ENCODE measurements at regions of chrX and their contacts with region 1.

Region 1: GRCh38 chrX:2627272-2627867 is 63.7 kb upstream of the CD99 start:
- DNase-seq: peak; percentile 69
- ATAC-seq: peak; percentile 83
- H3K4me3 Mint-ChIP-seq: no peak overlapping the region
- H3K27ac Mint-ChIP-seq: peak overlapping the region; percentile 23
- H3K4me1 Mint-ChIP-seq: peaks cover 36% of the 10 kb centered on the region
- H3K27me3 Mint-ChIP-seq: no peaks in the 10 kb centered on the region

Region 2: DNA sequence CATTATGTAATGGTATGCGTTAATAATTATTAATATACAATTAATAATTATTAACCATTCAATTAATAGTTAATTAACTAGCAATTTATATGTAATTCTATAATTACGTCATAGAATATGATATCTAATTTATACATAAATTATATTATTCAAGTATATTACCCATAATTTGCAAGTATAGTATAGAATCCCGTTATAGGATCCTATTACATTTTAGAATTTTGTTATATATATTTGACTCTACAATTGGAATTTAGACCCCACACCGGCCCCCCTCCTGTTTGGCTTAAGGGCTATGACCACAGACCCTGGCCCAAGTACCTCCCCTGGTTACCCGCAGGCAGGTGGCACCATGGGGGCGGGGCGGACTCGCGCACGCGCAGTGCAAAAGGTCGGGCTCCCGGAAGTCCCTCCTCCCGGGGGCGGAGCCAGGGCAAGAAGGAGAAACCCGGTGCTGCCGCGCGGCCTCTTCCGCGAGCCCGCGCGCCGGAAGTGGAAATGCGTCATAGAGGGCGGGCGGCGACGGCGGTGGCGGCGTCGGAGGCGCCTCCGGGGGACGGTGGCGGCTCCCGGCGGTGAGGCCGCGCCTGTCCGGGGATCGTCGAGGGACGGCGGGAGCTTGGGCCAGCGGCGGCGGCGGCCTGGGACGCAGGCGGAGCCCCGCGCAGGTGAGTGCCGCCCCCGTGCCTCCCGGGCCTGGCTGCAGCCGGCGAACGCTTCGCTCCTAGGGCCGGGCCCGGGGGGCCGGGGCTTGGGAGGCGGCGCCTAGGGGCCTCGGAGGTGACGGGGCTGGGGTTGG is 1036.1 kb before region 1 on chrX and contains the start of gene AKAP17A:
- CTCF ChIA-PET with region 1: no interaction called
- POLR2A ChIA-PET with region 1: no interaction called
- intact Hi-C with region 1: loop called in 1 of 2 experiments (anchors 1 kb)
- DNase-seq: peak; percentile 99
- ATAC-seq: peak; percentile 91
- H3K4me3 Mint-ChIP-seq: peak within 1 kb of the TSS; percentile 91
- H3K27ac Mint-ChIP-seq: peak within 1 kb of the TSS; percentile 89
- H3K4me1 Mint-ChIP-seq: peaks cover 27% of the 10 kb centered on the region
- H3K27me3 Mint-ChIP-seq: no peaks in the 10 kb centered on the region
- total RNA-seq, gene AKAP17A: 49.7 to 51.2 TPM

Region 3: DNA sequence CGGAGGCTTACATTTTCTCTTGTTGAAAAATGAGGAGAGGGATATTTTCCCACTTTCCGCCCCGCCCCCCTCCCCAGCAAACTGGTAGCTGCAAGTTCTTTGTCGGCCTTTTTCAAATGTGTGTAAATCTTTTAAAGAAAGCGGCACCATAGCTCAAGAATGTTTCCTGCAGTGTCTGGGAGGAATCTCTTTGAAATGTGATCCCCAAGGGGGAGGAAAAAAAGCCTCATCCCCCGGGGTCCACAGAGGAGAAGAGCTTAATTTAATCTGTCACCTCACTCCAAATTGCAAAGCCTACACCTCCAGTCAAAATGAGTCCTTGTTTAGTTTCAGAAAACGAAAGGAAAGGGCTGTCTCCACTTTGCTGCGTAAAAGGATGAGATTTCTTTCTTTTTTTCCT is 977.7 kb before region 1 on chrX:
- CTCF ChIA-PET with region 1: no interaction called
- POLR2A ChIA-PET with region 1: no interaction called
- intact Hi-C with region 1: loop called in 1 of 2 experiments (anchors 1 kb)
- DNase-seq: no peak
- ATAC-seq: no peak
- H3K4me3 Mint-ChIP-seq: no peak overlapping the region
- H3K27ac Mint-ChIP-seq: no peak overlapping the region
- H3K4me1 Mint-ChIP-seq: no peaks in the 10 kb centered on the region
- H3K27me3 Mint-ChIP-seq: no peaks in the 10 kb centered on the region

Region 4: GRCh38 chrX:2500267-2501075 is 126.9 kb before region 1 on chrX and contains the starts of genes DHRSX and ZBED1:
- CTCF ChIA-PET with region 1: no interaction called
- POLR2A ChIA-PET with region 1: no interaction called
- intact Hi-C with region 1: loop called in 1 of 2 experiments (anchors 2 kb)
- DNase-seq: peak; percentile 72
- ATAC-seq: peak; percentile 78
- H3K4me3 Mint-ChIP-seq: peak within 1 kb of the TSS; percentile 74
- H3K27ac Mint-ChIP-seq: peak within 1 kb of the TSS; percentile 81
- H3K4me1 Mint-ChIP-seq: peaks cover 26% of the 10 kb centered on the region
- H3K27me3 Mint-ChIP-seq: no peaks in the 10 kb centered on the region
- total RNA-seq, gene DHRSX: 13.8 to 17.7 TPM
- total RNA-seq, gene ZBED1: 30.0 to 33.6 TPM

Region 5: DNA sequence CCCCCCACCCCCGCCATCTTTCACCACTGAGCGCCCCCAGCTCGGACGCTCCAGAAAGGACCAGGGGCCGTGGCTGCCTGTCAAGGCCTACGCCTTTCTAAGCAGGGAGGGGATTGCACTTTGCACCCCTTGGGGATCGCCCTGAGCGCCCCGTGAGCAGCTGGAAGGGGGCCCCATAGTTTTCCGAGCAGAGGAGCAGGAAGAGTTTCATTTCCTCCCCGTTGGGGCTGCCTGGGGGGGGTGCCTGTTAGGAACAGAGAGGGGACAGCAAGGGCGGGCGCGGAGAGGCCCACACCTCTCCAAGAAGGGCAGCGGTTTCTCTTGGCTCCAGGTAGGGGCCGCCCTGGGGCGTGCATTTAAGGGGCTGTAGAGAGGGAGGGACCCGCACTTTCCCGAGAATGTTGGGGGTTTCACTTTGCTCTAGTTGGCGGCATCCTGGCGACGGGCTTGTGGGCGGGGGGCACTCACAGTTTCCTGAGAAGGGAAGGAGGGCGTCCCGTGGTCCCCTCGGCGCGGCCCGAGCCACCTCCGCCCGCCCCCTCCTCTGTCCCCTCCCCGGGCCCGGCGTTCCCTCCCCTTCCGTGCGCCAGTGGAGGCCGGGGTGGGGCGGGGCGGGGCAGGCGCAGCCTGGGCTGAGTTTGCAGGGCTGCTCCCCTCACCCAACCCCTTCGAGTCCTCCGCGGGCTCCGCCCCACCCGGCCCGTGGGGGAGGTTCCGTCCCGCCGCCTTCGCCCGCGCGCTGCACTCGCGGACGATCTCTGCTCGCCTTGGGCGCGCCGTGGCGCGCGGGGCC is 18.5 kb before region 1 on chrX:
- CTCF ChIA-PET with region 1: no interaction called
- POLR2A ChIA-PET with region 1: no interaction called
- intact Hi-C with region 1: loop called (anchors 2 kb)
- DNase-seq: peak; percentile 93
- ATAC-seq: peak; percentile 94
- H3K4me3 Mint-ChIP-seq: peak overlapping the region; percentile 83
- H3K27ac Mint-ChIP-seq: peak overlapping the region; percentile 82
- H3K4me1 Mint-ChIP-seq: peaks cover 47% of the 10 kb centered on the region
- H3K27me3 Mint-ChIP-seq: no peaks in the 10 kb centered on the region

Region 6: GRCh38 chrX:2664502-2664901 is 37.1 kb after region 1 on chrX:
- CTCF ChIA-PET with region 1: no interaction called
- POLR2A ChIA-PET with region 1: no interaction called
- intact Hi-C with region 1: no loop called
- DNase-seq: peak; percentile 23
- ATAC-seq: peak; percentile 61
- H3K4me3 Mint-ChIP-seq: no peak overlapping the region
- H3K27ac Mint-ChIP-seq: no peak overlapping the region
- H3K4me1 Mint-ChIP-seq: peaks cover 6% of the 10 kb centered on the region
- H3K27me3 Mint-ChIP-seq: no peaks in the 10 kb centered on the region

Region 7: DNA sequence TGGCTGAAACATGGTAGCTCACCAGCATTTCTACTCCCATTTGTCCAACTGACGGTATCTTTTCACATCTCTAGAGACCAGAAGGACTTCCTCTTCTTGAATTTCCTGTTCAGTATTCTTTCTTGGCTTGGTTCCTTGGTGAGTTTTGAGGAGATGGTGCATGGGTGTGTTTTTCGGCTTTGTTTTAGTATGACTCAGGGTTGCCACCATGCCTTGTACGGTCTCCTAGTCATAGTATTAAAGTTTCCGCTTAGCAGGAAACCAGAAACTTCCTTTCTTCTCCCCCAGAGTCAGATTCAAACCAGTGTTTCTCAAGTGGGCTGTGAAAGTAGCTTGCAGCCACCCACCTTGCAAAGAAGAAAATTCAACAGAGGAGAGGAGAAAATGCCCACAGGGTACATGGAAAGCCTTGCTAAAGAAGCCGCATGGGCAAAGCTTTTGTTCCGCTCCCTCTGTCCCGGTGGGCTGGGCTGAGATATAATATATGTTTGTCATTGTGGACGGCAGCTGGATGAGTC is 69.4 kb after region 1 on chrX:
- CTCF ChIA-PET with region 1: no interaction called
- POLR2A ChIA-PET with region 1: no interaction called
- intact Hi-C with region 1: loop called in 1 of 2 experiments (anchors 2 kb)
- DNase-seq: peak; percentile 72
- ATAC-seq: peak; percentile 81
- H3K4me3 Mint-ChIP-seq: peak overlapping the region; percentile 95
- H3K27ac Mint-ChIP-seq: peak overlapping the region; percentile 92
- H3K4me1 Mint-ChIP-seq: peaks cover 86% of the 10 kb centered on the region
- H3K27me3 Mint-ChIP-seq: no peaks in the 10 kb centered on the region

Region 8: DNA sequence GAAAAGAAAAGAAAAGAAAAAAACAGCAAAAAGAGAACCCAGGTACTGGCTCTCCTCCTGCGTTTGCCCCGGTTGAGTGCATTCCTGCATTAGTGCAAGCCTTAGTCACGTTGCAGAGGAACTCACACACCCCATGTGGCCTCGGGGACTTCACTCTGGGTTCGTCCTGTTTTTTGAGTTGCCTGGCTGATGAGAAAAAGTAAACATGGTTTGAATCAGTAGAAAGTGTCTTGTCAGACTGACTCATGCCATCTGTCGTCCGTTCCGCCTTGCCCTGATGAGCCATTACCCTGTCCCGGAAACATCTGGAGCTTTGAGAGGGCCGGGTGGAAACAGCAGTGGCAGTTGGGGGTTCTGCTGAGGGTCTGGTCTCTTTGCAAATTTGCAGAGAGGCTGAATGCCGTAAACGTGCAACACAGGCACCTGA is 80.0 kb after region 1 on chrX:
- CTCF ChIA-PET with region 1: no interaction called
- POLR2A ChIA-PET with region 1: no interaction called
- intact Hi-C with region 1: loop called (anchors 2 to 5 kb)
- DNase-seq: peak; percentile 86
- ATAC-seq: peak; percentile 61
- H3K4me3 Mint-ChIP-seq: peak overlapping the region; percentile 22
- H3K27ac Mint-ChIP-seq: peak overlapping the region; percentile 97
- H3K4me1 Mint-ChIP-seq: peaks cover 90% of the 10 kb centered on the region
- H3K27me3 Mint-ChIP-seq: no peaks in the 10 kb centered on the region